ENCODE measurements at regions of chr11 and their contacts with region 1.

Region 1: DNA sequence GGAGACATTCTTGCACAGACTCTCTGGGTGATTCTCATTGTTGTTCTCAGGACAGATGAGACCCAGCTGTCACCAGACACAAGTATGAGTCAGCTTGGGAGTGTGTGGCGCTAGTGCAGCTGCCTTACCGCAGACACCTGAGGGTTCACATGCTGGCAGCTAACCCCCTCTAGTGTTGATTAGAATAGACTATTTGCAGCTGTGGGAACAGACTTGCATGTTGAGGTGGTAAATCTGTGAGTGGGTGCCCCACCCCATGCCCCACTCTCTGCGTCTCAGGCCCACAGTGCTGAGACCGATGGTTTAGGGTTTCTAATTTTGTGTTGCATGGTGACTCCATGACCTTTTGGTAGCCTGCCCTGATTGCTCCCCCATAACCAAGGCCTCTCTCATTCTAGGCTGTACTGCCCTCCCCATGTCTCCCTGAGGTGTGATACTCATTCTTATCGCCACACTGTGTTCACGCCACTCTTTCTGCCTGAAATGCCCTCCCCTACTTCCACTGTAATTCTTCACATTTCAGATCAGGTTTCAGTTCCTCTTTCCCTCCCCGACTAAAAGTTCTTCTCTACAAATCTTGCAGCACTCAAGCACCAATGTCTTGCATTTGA is 73.7 kb upstream of the KIRREL3 start:
- DNase-seq: peak; percentile 37 to 59
- H3K4me3 ChIP-seq: no peak overlapping the region
- H3K27ac ChIP-seq: no peak overlapping the region
- H3K4me1 ChIP-seq: no peaks in the 10 kb centered on the region
- H3K27me3 ChIP-seq: peaks cover 33% of the 10 kb centered on the region
- CTCF ChIP-seq: no peak; the same call in 1 of the 2 replicates

Region 2: DNA sequence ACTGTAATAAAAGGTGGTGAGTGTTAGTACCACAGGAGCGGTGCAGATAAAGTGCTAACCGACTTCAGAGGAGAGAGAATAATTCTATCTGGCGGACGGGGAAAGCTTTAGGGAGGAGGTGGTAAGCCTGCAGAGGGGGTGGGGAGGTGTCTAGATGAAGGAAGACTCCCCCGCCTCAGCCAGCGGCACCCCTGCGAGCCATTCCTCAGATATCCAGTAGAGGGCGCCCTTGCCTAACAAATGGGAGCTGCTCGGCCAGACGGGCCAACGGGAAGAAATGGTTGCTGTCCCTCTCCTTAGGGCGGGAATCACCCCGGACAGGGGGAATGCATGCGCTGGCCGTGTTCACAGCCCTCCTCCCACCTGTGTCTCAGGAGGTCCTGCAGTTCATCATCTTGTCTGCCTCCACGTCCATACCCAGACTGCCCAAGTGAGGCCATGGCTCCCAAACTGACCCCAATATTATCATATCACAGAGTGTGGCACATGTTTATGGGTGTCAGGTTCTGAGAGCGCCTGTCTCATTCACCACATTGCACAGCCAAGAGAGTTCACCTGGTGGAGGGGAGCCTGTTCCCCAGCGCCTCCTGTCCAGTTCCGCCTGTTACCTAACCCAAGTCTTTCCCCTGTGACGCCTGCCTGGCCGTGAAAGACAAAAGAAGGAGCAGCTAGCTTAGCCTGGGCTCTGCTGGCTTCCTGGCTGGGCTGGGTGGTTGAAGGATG is 633.3 kb before region 1 on chr11:
- CTCF ChIA-PET with region 1: no interaction called
- POLR2A ChIA-PET with region 1: no interaction called
- intact Hi-C with region 1: loop called (anchors 2 kb)
- DNase-seq: peak; percentile 52 to 80
- H3K4me3 ChIP-seq: no peak overlapping the region
- H3K27ac ChIP-seq: no peak overlapping the region
- H3K4me1 ChIP-seq: peaks cover 3% of the 10 kb centered on the region; the same call in 1 of the 2 replicates
- H3K27me3 ChIP-seq: no peaks in the 10 kb centered on the region
- CTCF ChIP-seq: peak; percentile 98

Region 3: DNA sequence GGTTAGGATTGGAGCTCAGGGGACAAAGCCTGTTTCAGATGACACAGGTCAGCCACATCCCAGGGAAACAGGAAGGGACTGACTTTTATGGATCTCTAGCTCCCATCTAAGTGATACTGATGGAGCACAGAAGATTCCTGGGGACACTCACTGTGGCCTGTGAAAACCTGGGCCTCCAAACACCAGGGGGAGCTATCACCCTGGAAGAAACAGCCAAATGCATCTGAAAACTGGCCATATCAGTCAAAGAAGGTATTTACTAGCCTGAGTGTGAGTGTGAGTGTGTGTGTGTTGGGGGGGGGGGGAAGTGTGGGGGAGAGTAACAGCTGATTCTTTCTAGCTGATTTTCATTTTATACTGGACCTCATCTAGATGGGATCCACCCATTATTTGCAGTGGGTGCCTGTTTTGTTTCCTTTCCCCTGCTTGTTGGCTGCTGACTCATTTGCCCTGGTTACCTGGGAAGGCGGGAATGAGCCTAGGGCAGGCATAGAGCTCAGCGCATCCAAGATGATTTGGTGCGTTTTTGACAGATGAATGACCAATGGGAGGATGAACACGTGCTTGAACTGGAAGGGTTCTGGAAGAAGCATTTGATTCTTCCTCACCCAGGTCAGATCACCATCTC is 357.7 kb before region 1 on chr11:
- CTCF ChIA-PET with region 1: interaction called, 4 read pairs
- POLR2A ChIA-PET with region 1: no interaction called
- intact Hi-C with region 1: loop called (anchors 1 kb)
- DNase-seq: peak in 1 of 2 experiments; percentile 30
- H3K4me3 ChIP-seq: no peak overlapping the region
- H3K27ac ChIP-seq: no peak overlapping the region
- H3K4me1 ChIP-seq: no peaks in the 10 kb centered on the region
- H3K27me3 ChIP-seq: peaks cover 82% of the 10 kb centered on the region
- CTCF ChIP-seq: peak; percentile 63

Region 4: DNA sequence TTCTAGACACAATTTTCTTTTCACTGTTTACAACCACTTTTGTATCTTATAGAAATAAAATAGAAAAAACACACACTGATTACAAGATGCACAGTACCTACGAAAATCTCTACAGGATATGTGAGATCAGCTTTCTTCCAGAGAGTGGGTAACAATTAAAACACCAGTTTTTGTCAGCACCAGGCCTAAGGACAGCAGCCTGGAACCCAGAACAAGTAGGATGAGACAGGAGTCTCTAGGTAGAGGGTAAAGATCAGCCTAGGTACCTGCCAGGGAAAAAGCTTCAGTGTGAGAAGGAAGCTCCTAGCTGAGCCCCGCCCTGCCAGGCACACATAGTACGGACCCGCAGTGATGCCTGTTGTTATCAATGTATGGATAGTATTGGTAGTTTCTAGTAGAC is 135.5 kb before region 1 on chr11:
- CTCF ChIA-PET with region 1: no interaction called
- POLR2A ChIA-PET with region 1: no interaction called
- intact Hi-C with region 1: no loop called
- DNase-seq: no peak
- H3K4me3 ChIP-seq: no peak overlapping the region
- H3K27ac ChIP-seq: no peak overlapping the region
- H3K4me1 ChIP-seq: no peaks in the 10 kb centered on the region
- H3K27me3 ChIP-seq: peaks cover 38% of the 10 kb centered on the region
- CTCF ChIP-seq: no peak

Region 5: GRCh38 chr11:127003260-127003981 is 70.8 kb before region 1 on chr11:
- CTCF ChIA-PET with region 1: interaction called, 4 read pairs
- POLR2A ChIA-PET with region 1: no interaction called
- intact Hi-C with region 1: loop called (anchors 1 kb)
- DNase-seq: peak in 1 of 2 experiments; percentile 63
- H3K4me3 ChIP-seq: no peak overlapping the region
- H3K27ac ChIP-seq: no peak overlapping the region
- H3K4me1 ChIP-seq: no peaks in the 10 kb centered on the region
- H3K27me3 ChIP-seq: peaks cover 51% of the 10 kb centered on the region
- CTCF ChIP-seq: no peak

Region 6: DNA sequence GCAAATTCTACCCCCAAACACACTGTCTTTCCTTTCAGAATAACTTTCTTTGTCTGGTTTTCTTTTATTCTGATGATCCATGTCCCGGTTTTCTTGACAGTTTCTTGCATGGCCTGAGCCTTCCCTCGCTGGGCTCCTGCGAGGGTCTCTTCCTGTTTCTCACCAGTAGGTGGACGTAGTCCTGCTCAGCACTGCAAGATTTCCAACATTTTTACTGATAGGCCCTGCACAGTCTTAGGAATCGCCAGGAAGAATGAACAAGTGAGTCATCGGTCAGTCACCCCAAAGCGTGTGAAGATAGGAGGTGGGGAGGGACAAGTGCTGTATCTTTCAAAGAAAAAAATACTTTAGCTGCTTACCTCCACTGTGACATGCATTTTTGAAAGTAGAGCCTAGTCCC is 56.8 kb before region 1 on chr11:
- CTCF ChIA-PET with region 1: interaction called, 3 read pairs
- POLR2A ChIA-PET with region 1: interaction called, 3 read pairs
- intact Hi-C with region 1: loop called (anchors 1 kb)
- DNase-seq: peak in 1 of 2 experiments; percentile 65
- H3K4me3 ChIP-seq: no peak overlapping the region
- H3K27ac ChIP-seq: no peak overlapping the region
- H3K4me1 ChIP-seq: no peaks in the 10 kb centered on the region
- H3K27me3 ChIP-seq: no peaks in the 10 kb centered on the region
- CTCF ChIP-seq: 0 out of 2 replicates have a peak, but pooled peaks have one; percentile 24

Measured in PC-9 (cell line).